Activated CD4-positive, alpha-beta T cell treated with anti-CD3 and anti-CD28 coated beads, Interleukin-2, amount 10 ng/mL, durations not matched to agents 24 days and 14 days (primary cell): ENCODE measurements at regions of chr20 and their contacts with region 1.

Region 1: DNA sequence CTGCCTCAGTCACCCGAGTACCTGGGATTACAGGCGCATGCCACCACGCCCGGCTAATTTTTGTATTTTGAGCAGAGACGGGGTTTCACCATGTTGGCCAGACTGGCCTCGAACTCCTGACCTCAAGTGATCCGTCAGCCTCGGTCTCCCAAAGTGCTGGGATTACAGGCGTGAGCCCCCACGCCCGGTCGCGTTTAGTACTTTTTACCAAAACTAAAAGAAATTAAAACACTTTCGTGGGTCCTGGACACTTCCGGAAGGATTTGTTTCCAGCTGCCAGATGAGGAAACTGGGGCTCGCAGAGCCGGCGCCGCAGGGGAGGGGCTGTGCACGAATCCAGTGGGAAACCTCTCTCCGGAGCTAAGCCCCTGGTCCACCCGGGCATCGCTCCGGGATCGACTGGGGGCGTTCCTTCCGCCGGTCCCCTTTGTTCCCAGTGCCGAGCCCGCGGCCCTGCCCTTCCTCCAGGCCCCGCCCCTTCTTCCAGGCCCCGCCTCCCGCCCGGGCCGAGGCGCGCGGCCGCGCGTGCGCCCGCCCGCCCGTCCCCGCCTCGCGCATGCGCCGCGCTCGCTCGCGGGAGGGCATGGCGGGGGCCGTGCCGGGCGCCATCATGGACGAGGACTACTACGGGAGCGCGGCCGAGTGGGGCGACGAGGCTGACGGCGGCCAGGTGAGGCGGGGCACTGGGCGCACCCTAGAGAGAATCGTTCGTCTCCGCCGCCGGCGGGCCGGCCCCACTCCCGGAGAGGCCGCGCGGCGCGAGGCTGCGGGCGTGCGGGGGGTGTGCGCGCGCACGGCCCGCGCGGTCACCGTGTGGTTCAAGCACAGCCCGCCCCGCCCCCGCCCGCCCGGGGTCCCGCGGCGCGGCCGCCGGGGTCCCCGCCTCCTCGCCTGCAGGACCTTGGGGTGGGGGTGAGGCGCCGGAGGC is at the start of gene NELFCD:
- DNase-seq: peak; percentile 97
- H3K4me3 Mint-ChIP-seq: peak within 1 kb of the TSS; percentile 94
- H3K27ac Mint-ChIP-seq: peak within 1 kb of the TSS; percentile 91
- H3K4me1 Mint-ChIP-seq: peaks cover 27% of the 10 kb centered on the region
- H3K27me3 Mint-ChIP-seq: peaks cover 9% of the 10 kb centered on the region
- total RNA-seq, gene NELFCD: 119 and 120 TPM in 2 replicates

Region 2: DNA sequence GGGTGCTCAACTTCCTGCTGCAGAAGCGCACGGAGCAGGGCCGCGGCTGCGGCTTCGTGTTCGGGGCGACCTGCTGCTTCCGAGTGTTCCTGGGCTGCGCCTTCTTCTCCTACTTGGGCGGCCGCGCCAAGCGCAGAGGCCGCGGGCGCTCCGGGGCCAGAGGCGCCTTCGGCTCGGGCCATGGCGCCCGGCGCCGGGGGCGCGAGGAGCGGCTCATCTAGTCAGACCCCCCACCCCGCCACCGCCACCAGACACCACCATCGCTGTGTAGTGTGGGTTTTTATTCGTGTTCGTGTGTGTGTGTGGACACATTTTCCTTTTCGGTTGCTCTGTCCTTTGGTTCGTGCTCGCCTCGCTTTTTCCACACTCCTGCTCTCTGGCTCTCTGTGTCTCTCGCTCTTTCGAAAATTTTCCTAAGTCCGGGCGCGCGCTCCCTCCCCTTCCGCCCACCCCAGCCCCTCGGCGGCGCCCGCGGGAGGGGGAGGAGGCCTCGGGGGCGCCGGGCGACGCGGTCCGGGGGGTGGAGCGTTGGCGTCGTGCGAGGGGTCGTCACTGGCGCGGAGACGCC is 90.4 kb before region 1 on chr20:
- intact Hi-C with region 1: loop called (anchors 1 kb)
- DNase-seq: peak; percentile 87
- H3K4me3 Mint-ChIP-seq: peak overlapping the region; percentile 94
- H3K27ac Mint-ChIP-seq: peak overlapping the region; percentile 97
- H3K4me1 Mint-ChIP-seq: peaks cover 38% of the 10 kb centered on the region
- H3K27me3 Mint-ChIP-seq: no peaks in the 10 kb centered on the region

Region 3: GRCh38 chr20:59006864-59007664 is 26.1 kb after region 1 on chr20 and contains the start of gene CTSZ:
- intact Hi-C with region 1: loop called (anchors 2 kb)
- DNase-seq: peak; percentile 87
- H3K4me3 Mint-ChIP-seq: peak within 1 kb of the TSS; percentile 89
- H3K27ac Mint-ChIP-seq: peak within 1 kb of the TSS; percentile 91
- H3K4me1 Mint-ChIP-seq: peaks cover 45% of the 10 kb centered on the region
- H3K27me3 Mint-ChIP-seq: no peaks in the 10 kb centered on the region
- total RNA-seq, gene CTSZ: 48.1 and 51.1 TPM in 2 replicates

Region 4: DNA sequence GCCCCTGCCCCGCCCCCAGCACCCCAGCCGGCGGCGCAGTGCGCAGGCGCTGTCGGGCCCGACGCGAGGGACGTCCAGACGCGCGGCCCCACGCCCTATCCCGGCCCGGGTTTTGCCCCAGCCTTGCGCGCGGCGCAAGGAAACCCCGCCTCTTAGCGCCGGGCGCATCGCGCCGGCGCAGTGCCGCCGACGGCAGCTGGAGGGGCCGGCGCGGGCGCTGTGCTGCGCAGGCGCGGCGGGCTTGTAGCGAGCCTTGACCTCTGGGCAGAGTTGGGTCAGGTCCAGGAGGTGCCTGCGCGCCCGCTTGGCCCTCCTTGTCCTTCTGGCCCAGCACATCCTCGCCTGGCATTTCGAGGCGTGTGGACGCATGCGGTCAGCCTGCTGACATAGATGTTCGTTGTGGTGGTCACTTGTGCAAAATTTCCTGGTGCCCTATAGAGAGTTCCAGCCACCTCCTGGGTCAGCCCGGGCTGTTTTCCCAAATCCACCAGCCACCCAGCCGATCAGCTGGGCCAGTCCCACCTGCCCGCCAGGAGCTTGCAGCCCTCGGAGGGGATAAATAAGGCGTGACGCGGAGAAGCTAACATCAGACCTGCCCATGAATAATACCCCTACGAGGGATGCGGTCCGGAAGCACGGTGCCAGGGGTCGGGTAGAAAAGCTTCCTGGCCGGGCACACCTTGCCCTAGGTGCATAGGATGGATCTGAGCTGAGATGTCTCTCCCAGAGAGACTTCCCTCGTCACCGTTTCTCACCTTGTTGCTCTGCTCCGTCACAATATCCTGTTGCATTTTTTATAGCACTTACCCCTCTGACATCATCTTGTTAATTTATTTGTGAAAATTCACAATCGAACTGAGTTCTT is 62.1 kb after region 1 on chr20:
- intact Hi-C with region 1: loop called (anchors 1 kb)
- DNase-seq: peak; percentile 99
- H3K4me3 Mint-ChIP-seq: peak overlapping the region; percentile 93
- H3K27ac Mint-ChIP-seq: peak overlapping the region; percentile 96
- H3K4me1 Mint-ChIP-seq: peaks cover 42% of the 10 kb centered on the region
- H3K27me3 Mint-ChIP-seq: no peaks in the 10 kb centered on the region

Region 5: DNA sequence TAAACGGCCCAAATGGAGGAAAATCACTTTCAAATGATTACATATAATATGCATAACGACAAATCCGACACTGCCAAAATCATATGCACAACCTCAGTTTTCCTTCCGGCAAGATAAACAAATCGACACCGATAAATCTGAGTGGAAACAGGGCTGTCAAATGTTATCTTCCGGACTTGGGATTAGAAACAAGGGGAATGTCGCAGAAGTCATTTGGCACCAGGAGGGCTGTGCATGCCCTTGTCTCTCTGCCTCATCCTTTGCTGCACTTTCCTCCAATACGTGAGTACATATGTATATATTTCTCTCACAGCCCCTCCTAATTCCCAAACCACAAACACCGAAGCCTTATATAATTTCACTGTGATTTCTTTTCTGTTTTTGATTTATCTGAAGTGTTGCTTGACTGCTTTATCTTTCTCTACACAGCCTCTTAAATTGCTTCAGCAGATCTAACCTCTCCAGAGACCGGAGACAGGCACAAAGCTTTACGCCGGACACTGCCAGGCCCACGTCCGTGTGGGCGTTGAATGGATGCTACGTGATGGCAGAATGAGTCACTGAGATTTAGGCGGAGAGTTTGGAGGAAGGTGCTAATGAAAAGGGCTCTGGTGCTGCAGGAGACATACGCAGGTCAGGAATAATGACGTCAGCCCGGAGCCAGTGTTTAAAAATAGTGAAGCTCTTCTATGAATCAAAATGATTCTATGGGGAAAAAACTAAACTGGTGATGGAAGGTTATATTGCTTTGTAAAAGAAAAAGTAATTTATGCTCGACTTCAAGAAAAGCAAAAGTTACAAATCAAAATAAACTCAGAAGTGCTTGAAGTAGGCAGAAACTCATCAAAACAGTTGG is 82.6 kb after region 1 on chr20:
- intact Hi-C with region 1: no loop called
- DNase-seq: peak; percentile 50
- H3K4me3 Mint-ChIP-seq: no peak overlapping the region
- H3K27ac Mint-ChIP-seq: no peak overlapping the region
- H3K4me1 Mint-ChIP-seq: peaks cover 3% of the 10 kb centered on the region
- H3K27me3 Mint-ChIP-seq: peaks cover 40% of the 10 kb centered on the region